Ascending aorta (tissue), 2 donors: ENCODE measurements at regions of chr22 and their contacts with region 1.

Region 1: GRCh38 chr22:20430720-20431510 is 6.7 kb downstream of the SCARF2 start:
- DNase-seq: no peak
- H3K4me3 ChIP-seq: peak overlapping the region; percentile 30 to 49
- H3K27ac ChIP-seq: no peak overlapping the region
- H3K4me1 ChIP-seq: peaks cover 3 to 19% of the 10 kb centered on the region in 2 donors
- H3K27me3 ChIP-seq: no peaks in the 10 kb centered on the region
- CTCF ChIP-seq: peak in 2 of 3 experiments; percentile 16 to 25

Region 2: DNA sequence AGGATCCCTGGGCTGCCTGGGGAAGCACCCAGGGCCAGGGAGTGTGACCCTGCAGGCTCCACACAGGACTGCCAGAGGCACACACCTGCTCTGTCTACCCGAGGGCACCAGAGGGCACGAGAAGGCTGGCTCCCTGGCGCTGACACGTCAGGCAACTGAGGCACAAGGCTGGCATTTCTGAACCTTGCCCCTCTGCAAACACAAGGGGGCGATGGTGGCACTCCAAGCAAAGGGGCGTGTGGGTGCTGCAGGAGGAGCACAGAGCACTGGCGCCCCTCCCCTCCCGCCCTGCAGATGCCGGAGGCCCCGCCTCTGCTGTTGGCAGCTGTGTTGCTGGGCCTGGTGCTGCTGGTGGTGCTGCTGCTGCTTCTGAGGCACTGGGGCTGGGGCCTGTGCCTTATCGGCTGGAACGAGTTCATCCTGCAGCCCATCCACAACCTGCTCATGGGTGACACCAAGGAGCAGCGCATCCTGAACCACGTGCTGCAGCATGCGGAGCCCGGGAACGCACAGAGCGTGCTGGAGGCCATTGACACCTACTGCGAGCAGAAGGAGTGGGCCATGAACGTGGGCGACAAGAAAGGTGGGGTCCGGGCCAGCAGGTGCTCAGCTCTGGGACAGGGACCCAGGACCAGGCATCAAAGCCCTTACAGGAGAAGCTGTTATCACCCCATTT is 468.5 kb before region 1 on chr22:
- intact Hi-C with region 1: loop called (anchors 10 kb)
- DNase-seq: peak in 1 of 2 donors; percentile 83
- H3K4me3 ChIP-seq: no peak overlapping the region
- H3K27ac ChIP-seq: no peak overlapping the region
- H3K4me1 ChIP-seq: peaks cover 2 to 14% of the 10 kb centered on the region in 2 donors
- H3K27me3 ChIP-seq: no peaks in the 10 kb centered on the region
- CTCF ChIP-seq: peak in 2 of 3 experiments; percentile 54 to 61

Region 3: GRCh38 chr22:20205964-20206708 is 224.8 kb before region 1 on chr22:
- intact Hi-C with region 1: no loop called
- DNase-seq: peak in 1 of 2 donors; percentile 74
- H3K4me3 ChIP-seq: peak overlapping the region; percentile 55 to 58
- H3K27ac ChIP-seq: peak overlapping the region; percentile 37 to 54
- H3K4me1 ChIP-seq: peaks cover under 1 to 25% of the 10 kb centered on the region in 2 donors
- H3K27me3 ChIP-seq: no peaks in the 10 kb centered on the region
- CTCF ChIP-seq: no peak